ENCODE measurements at regions of chr2 and their contacts with region 1.

Region 1: GRCh38 chr2:222707689-222708525 is 36.4 kb downstream of the MOGAT1 start:
- DNase-seq: peak; percentile 76
- H3K4me3 Mint-ChIP-seq: no peak overlapping the region
- H3K27ac Mint-ChIP-seq: no peak overlapping the region
- H3K4me1 Mint-ChIP-seq: peaks cover 9% of the 10 kb centered on the region
- H3K27me3 Mint-ChIP-seq: peaks cover 44% of the 10 kb centered on the region

Region 2: DNA sequence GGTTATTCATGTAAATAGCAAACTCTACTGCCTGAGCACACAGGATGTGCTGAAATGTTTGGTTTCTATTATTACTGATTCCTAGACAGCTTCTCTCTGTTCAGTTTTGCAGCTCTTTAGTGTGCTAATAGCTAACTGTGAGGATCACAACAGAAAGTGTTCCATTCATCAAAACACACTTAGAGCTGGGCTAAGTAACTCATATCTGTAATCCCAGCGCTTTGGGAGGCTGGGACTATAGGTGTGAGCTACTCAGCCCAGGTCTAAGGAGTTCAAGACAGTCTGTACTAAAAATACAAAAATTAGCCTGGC is 26.8 kb after region 1 on chr2:
- CTCF ChIA-PET with region 1: interaction called, 11 read pairs
- POLR2A ChIA-PET with region 1: no interaction called
- DNase-seq: no peak
- H3K4me3 Mint-ChIP-seq: no peak overlapping the region
- H3K27ac Mint-ChIP-seq: no peak overlapping the region
- H3K4me1 Mint-ChIP-seq: peaks cover 18% of the 10 kb centered on the region
- H3K27me3 Mint-ChIP-seq: peaks cover 43% of the 10 kb centered on the region

Region 3: DNA sequence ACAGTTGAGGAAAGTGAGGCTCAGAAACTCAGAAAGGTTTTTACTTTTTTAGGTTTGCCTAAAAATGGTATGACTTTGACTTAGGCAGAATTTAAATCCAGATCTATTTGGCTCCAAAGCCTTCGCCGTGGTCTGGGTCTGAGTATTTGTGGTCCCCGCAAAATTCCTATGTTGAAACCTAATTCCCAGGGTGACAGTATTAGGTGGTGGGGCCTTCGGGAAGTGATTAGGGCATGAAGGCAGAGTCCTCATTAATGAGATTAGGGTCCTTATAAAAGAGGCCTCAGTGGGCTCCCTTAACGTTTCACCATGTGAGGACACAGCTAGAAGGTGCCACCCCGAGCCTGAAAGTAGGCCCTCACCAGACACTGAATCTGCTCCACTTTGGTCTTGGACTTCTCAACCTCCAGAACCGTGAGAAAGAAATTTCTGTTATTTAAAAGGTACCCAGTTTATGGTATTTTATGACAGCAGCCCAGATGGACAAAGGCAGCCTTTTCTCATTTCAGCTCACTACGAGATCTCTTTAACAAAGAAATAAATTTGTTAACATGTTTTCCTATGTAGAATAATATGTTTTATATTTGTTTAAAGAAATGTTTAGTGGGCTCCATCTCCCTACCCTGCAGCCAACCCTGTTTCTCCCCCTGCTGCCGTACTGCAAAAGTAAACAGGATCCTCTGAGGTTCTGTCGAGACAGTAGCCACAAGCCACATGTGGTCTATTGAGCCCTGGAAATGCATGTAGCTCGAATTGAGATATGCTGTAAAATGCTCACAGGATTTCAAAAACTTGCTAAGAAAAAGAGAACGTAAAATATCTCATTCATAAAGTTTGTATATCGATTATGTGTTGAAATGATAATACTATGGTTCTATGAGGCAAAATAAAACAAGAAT is 44.2 kb after region 1 on chr2:
- CTCF ChIA-PET with region 1: interaction called, 12 read pairs
- POLR2A ChIA-PET with region 1: no interaction called
- DNase-seq: peak; percentile 36
- H3K4me3 Mint-ChIP-seq: no peak overlapping the region
- H3K27ac Mint-ChIP-seq: no peak overlapping the region
- H3K4me1 Mint-ChIP-seq: peaks cover 20% of the 10 kb centered on the region
- H3K27me3 Mint-ChIP-seq: peaks cover 9% of the 10 kb centered on the region

Region 4: DNA sequence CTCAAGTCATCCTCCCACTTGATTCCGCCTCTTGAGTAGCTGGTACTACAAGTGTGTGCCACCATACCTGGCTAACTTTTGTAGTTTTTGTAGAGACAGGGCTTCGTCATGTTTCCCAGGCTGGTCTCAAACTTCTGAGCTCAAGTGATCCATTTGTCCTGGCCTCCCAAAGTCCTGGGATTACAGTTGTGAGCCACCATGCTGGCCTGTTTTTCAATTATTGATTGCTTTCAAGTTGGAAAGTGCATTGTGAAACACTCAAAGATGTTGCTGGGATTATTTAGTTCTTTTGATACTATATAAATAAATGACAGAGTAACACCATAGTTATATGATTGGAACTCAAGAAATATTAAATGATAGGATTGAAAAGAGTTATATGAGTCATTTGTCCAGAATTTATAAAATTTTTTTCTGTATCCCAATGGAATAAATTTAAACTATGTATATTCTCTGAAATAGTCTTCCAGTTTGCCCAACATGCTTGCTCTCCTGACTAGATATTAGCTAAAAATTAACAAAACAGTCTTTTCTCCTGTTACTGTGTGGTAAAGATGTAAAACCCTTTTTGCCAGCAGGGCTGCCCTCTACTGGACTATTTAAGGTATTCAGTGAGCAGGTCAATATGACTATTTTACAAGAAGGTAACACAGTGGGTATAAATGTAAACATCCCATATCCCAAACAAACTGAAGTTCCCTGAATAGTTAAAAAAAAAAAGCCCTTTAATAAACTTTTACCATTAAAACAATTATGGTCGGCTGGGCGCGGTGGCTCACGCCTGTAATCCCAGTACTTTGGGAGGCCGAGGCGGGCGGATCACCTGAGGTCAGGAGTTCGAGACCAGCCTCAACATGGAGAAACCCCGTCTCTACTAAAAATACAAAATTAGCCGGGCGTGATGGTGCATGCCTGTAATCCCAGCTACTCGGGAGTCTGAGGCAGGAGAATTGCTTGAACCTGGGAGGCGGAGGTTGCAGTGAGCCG is 195.6 kb after region 1 on chr2:
- CTCF ChIA-PET with region 1: interaction called, 55 read pairs
- POLR2A ChIA-PET with region 1: interaction called, 5 read pairs
- DNase-seq: peak; percentile 28
- H3K4me3 Mint-ChIP-seq: no peak overlapping the region
- H3K27ac Mint-ChIP-seq: no peak overlapping the region
- H3K4me1 Mint-ChIP-seq: peaks cover 6% of the 10 kb centered on the region
- H3K27me3 Mint-ChIP-seq: no peaks in the 10 kb centered on the region

Measured in activated CD4-positive, alpha-beta memory T cell treated with anti-CD3 and anti-CD28 coated beads, Interleukin-2, amount 10 ng/mL, durations not matched to agents 7 days and 5 days (primary cell).